ENCODE measurements at regions of chr11 and their contacts with region 1.

Region 1: GRCh38 chr11:59918987-59919589 is 19.1 kb upstream of the OOSP1 start:
- DNase-seq: peak; percentile 35
- ATAC-seq: peak; percentile 58; the same call in 1 of the 2 replicates
- H3K4me3 Mint-ChIP-seq: no peak overlapping the region
- H3K27ac Mint-ChIP-seq: no peak overlapping the region
- H3K4me1 Mint-ChIP-seq: no peaks in the 10 kb centered on the region
- H3K27me3 Mint-ChIP-seq: 0 out of 2 replicates have a peak, but pooled peaks cover 3% of the 10 kb centered on the region
- CTCF ChIP-seq: no peak

Region 2: DNA sequence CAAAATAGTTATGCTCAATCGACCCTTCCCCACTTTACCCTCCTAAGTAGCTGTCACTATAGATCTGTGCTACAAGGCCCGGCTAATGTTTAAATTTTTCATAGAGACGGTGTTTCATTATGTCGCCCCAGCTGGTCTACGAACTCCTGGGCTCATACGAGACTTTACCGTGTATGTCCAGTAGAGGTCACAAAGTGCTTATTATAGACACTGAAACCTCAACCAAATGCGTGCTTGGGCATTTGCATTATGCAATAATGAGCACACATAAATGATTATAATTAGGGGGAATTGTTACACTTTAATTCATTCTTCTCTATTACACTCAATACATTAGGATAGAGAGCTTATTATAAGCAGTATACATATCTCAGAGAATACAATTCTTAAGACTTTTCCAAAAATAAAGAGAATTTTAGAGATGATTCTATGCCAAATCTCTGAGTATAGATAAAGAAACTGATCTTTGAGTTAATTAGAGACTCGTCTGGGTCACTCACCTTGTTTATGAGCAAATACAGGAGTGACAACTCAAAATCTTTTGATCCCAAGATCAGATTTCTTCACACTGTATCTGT is 96.0 kb before region 1 on chr11:
- CTCF ChIA-PET with region 1: interaction called, 15 read pairs
- POLR2A ChIA-PET with region 1: no interaction called
- DNase-seq: peak; percentile 16
- ATAC-seq: peak; percentile 59; the same call in 1 of the 2 replicates
- H3K4me3 Mint-ChIP-seq: no peak overlapping the region
- H3K27ac Mint-ChIP-seq: no peak overlapping the region; the same call in 1 of the 2 replicates
- H3K4me1 Mint-ChIP-seq: peaks cover 19% of the 10 kb centered on the region
- H3K27me3 Mint-ChIP-seq: no peaks in the 10 kb centered on the region
- CTCF ChIP-seq: peak; percentile 40; the same call in 1 of the 2 replicates